SK-N-SH (cell line): ENCODE measurements at regions of chr17 and their contacts with region 1.

Region 1: GRCh38 chr17:17496189-17497064 is at the start of gene RASD1:
- DNase-seq: peak; percentile 98
- H3K4me3 ChIP-seq: peak within 1 kb of the TSS; percentile 63 to 76
- H3K27ac ChIP-seq: peak within 1 kb of the TSS; percentile 44 to 60; a peak in 3 of 4 replicates
- H3K4me1 ChIP-seq: peaks cover 0 to 7% of the 10 kb centered on the region in 2 experiments; a peak in 1 of 4 replicates
- H3K27me3 ChIP-seq: no peaks in the 10 kb centered on the region
- CTCF ChIP-seq: peak; percentile 75
- EP300 ChIP-seq: no peak
- RAD21 ChIP-seq: peak; percentile 78
- polyA plus RNA-seq, gene RASD1: 0.26 and 0.43 TPM in 2 replicates

Region 2: GRCh38 chr17:16820161-16820877 is 676.1 kb before region 1 on chr17:
- CTCF ChIA-PET with region 1: no interaction called
- POLR2A ChIA-PET with region 1: no interaction called
- DNase-seq: no peak
- H3K4me3 ChIP-seq: no peak overlapping the region
- H3K27ac ChIP-seq: no peak overlapping the region
- H3K4me1 ChIP-seq: no peaks in the 10 kb centered on the region
- H3K27me3 ChIP-seq: peaks cover 39% of the 10 kb centered on the region; the same call in 1 of the 2 replicates
- CTCF ChIP-seq: no peak
- EP300 ChIP-seq: no peak
- RAD21 ChIP-seq: no peak

Region 3: GRCh38 chr17:17356149-17356930 is 140.1 kb before region 1 on chr17:
- CTCF ChIA-PET with region 1: interaction called, 63 read pairs
- POLR2A ChIA-PET with region 1: interaction called, 3 read pairs
- DNase-seq: peak; percentile 90
- H3K4me3 ChIP-seq: no peak overlapping the region; a peak in 1 of 4 replicates
- H3K27ac ChIP-seq: no peak overlapping the region
- H3K4me1 ChIP-seq: peaks cover 0 to 26% of the 10 kb centered on the region in 2 experiments; a peak in 1 of 4 replicates
- H3K27me3 ChIP-seq: no peaks in the 10 kb centered on the region
- CTCF ChIP-seq: peak; percentile 99
- EP300 ChIP-seq: no peak
- RAD21 ChIP-seq: peak; percentile 100

Region 4: GRCh38 chr17:17523001-17523730 is 26.7 kb after region 1 on chr17:
- CTCF ChIA-PET with region 1: interaction called, 16 read pairs
- POLR2A ChIA-PET with region 1: no interaction called
- DNase-seq: no peak
- H3K4me3 ChIP-seq: no peak overlapping the region
- H3K27ac ChIP-seq: peak overlapping the region in 1 of 2 experiments; percentile 43; a peak in 1 of 4 replicates
- H3K4me1 ChIP-seq: peaks cover 0 to 19% of the 10 kb centered on the region in 2 experiments; a peak in 1 of 4 replicates
- H3K27me3 ChIP-seq: no peaks in the 10 kb centered on the region
- CTCF ChIP-seq: no peak
- EP300 ChIP-seq: no peak
- RAD21 ChIP-seq: no peak

Region 5: DNA sequence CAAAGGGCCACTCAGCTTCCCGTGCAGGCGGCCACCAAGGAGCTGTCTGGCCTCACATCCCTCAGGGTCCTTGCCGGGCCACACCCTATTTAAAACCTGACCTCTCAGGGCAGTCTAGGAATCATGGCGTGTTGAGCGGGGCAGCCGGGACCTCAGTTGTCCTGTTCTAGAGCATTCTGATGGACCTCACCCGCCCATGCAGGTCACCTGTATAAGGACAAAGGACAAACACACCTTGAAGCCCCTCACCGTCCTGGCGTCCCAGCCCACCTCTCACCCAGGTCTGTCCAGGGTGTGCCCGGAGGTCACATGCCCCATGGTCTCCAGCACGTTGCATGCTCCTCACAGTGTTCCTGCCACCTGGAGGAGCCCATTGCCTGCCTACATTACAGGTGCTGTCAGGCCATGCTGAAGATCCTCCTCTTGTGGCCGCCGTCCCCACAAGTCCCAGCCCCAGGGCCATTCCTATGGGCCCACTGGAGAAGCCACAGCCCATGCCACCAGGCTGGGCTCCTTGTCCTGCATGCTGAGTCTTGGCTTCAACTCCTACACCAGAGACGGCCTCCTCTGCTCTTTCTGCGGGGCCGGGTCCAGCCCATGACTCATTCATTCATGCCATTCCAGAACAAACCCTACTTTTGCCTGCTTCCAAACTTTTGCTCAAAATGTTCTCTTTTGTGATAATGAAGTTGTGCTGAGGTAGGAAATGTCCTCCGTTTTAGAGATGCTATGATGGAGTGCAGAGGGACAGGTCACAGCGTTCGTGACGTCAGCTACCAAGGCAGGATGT is 48.8 kb after region 1 on chr17:
- CTCF ChIA-PET with region 1: interaction called, 21 read pairs
- POLR2A ChIA-PET with region 1: interaction called, 9 read pairs
- DNase-seq: no peak
- H3K4me3 ChIP-seq: no peak overlapping the region
- H3K27ac ChIP-seq: peak overlapping the region in 1 of 2 experiments; percentile 96; a peak in 2 of 4 replicates
- H3K4me1 ChIP-seq: peaks cover 0 to 69% of the 10 kb centered on the region in 2 experiments; a peak in 2 of 4 replicates
- H3K27me3 ChIP-seq: no peaks in the 10 kb centered on the region
- CTCF ChIP-seq: no peak
- EP300 ChIP-seq: no peak
- RAD21 ChIP-seq: no peak

Region 6: GRCh38 chr17:17568749-17569195 is 72.3 kb after region 1 on chr17:
- CTCF ChIA-PET with region 1: interaction called, 185 read pairs
- POLR2A ChIA-PET with region 1: interaction called, 14 read pairs
- DNase-seq: peak; percentile 85
- H3K4me3 ChIP-seq: no peak overlapping the region
- H3K27ac ChIP-seq: no peak overlapping the region
- H3K4me1 ChIP-seq: peaks cover 0 to 52% of the 10 kb centered on the region in 2 experiments; a peak in 1 of 4 replicates
- H3K27me3 ChIP-seq: no peaks in the 10 kb centered on the region
- CTCF ChIP-seq: peak; percentile 71
- EP300 ChIP-seq: no peak
- RAD21 ChIP-seq: peak; percentile 71

Region 7: DNA sequence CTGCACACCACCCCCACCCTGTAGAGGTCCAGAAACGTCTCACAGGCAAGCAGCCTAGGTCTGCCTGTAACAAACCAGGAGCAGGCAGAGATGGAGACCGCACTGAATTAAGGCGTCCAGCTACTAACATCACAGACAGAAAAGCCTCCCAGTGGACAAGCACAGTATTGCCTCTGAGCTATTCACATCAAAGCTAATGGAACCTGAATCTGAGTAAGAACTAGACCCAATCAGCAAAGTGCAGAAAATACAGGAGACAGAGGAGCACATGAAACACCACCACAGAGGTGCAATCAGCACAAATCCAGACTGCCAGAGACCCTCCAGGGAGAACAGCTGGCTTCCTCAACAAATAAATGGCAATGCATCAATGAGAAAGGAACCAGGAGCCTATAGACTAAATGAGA is 117.3 kb after region 1 on chr17:
- CTCF ChIA-PET with region 1: interaction called, 17 read pairs
- POLR2A ChIA-PET with region 1: interaction called, 3 read pairs
- DNase-seq: peak; percentile 70
- H3K4me3 ChIP-seq: no peak overlapping the region
- H3K27ac ChIP-seq: no peak overlapping the region
- H3K4me1 ChIP-seq: no peaks in the 10 kb centered on the region
- H3K27me3 ChIP-seq: no peaks in the 10 kb centered on the region
- CTCF ChIP-seq: peak; percentile 68
- EP300 ChIP-seq: no peak
- RAD21 ChIP-seq: peak; percentile 71

Region 8: DNA sequence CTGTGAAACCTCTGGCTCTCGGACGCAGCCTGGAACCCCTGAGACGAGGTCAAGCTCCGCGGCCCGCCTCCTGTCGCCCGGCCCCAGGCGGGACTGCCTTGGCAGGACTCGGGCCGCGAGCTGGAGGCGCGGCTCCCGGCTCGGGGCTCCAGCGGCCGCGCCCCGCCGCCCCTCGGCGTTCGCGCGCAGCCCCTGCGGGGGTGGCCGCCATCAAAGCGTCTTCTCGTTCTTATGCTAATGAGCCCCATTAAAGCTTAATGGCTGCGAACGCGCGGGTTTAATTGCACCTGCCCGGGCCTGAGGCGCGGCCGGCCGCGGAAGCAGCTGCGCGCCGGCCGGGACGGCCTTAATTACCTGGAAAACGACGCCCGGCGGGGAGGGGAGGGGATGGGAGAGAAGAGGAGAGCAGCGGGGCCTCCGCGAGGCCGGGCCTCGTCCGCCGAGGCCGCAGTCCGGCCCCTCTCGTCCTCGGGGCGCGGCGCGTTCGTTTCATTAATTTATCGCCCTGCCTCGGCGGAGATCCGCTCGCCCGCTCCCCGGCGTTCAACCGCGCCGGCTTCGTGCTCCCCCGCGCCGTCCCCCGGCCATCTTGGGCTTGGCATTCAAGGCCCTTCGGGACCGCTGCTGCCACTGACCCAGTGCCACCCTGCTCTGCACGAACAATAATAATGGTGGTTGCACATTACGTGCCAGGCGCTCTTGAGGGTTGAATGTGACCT is 204.0 kb after region 1 on chr17:
- CTCF ChIA-PET with region 1: no interaction called
- POLR2A ChIA-PET with region 1: no interaction called
- DNase-seq: no peak
- H3K4me3 ChIP-seq: no peak overlapping the region
- H3K27ac ChIP-seq: no peak overlapping the region
- H3K4me1 ChIP-seq: peaks cover 41 to 62% of the 10 kb centered on the region in 2 experiments; a peak in 3 of 4 replicates
- H3K27me3 ChIP-seq: no peaks in the 10 kb centered on the region
- CTCF ChIP-seq: no peak
- EP300 ChIP-seq: no peak
- RAD21 ChIP-seq: no peak